CD8-positive, alpha-beta memory T cell (primary cell): ENCODE measurements at regions of chr9 and their contacts with region 1.

Region 1: DNA sequence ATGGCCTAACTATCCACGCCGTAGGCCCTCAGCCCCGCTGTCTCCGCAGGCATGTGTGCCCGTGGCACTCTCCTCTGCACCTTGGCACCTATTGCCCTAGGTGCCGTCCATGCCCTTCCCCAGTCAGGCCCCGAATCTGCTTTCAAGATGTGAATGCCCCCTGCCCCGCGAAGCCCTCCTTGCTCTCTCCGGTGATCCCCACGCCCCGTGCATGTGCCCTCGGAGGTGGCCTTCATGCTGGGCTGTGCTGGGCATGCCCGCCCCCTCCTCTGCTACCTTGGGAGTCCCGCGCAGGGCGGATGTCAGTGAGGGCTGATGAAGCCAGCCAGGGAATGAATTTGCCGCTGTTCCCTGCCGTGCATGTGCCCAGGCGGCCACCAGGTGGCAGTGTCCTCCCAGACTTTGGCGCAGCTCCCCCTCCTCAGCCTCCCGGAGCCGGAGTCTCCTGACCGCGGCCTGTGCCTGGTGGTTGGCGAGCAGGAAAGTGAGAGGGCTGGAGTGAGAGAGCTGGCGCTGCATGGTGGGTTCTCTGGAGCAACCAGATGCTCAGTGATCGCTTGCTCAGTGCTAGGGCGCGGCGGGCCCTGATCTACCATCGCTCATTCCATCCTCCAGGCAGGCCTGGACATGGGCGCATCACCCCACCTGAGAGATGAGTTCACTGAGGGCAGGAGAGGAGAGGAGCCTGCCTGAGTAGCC is 112.9 kb upstream of the LMX1B start:
- DNase-seq: peak; percentile 51 to 69 (median 54)
- H3K4me3 ChIP-seq: no peak overlapping the region
- H3K4me3 Mint-ChIP-seq: peak overlapping the region in 3 of 7 donors; percentile 21 to 41 (median 41)
- H3K27ac ChIP-seq: no peak overlapping the region
- H3K27ac Mint-ChIP-seq: peak overlapping the region in 1 of 8 donors; percentile 68
- H3K4me1 ChIP-seq: peaks cover 9% of the 10 kb centered on the region
- H3K4me1 Mint-ChIP-seq: peaks cover 8 to 30% (median 12%) of the 10 kb centered on the region in 3 donors
- H3K27me3 ChIP-seq: peaks cover 5% of the 10 kb centered on the region
- H3K27me3 Mint-ChIP-seq: peaks cover 0 to 2% of the 10 kb centered on the region in 2 donors

Region 2: GRCh38 chr9:126471084-126471624 is 29.7 kb before region 1 on chr9:
- CTCF ChIA-PET with region 1: interaction called, 21 read pairs
- POLR2A ChIA-PET with region 1: no interaction called
- DNase-seq: peak; percentile 60 to 90 (median 76)
- H3K4me3 ChIP-seq: peak overlapping the region; percentile 39
- H3K4me3 Mint-ChIP-seq: peak overlapping the region; percentile 71 to 89 (median 80)
- H3K27ac ChIP-seq: no peak overlapping the region
- H3K27ac Mint-ChIP-seq: peak overlapping the region; percentile 91 to 99 (median 96)
- H3K4me1 ChIP-seq: peaks cover 58% of the 10 kb centered on the region
- H3K4me1 Mint-ChIP-seq: peaks cover 82 to 97% (median 84%) of the 10 kb centered on the region in 3 donors
- H3K27me3 ChIP-seq: no peaks in the 10 kb centered on the region
- H3K27me3 Mint-ChIP-seq: peaks cover 0 to 1% of the 10 kb centered on the region in 2 donors

Region 3: GRCh38 chr9:126514047-126514821 is 13.4 kb after region 1 on chr9:
- CTCF ChIA-PET with region 1: interaction called, 49 read pairs
- POLR2A ChIA-PET with region 1: no interaction called
- DNase-seq: peak; percentile 40 to 73 (median 60)
- H3K4me3 ChIP-seq: no peak overlapping the region
- H3K4me3 Mint-ChIP-seq: peak overlapping the region in 1 of 7 donors; percentile 41
- H3K27ac ChIP-seq: no peak overlapping the region
- H3K27ac Mint-ChIP-seq: no peak overlapping the region
- H3K4me1 ChIP-seq: peaks cover 29% of the 10 kb centered on the region
- H3K4me1 Mint-ChIP-seq: peaks cover 31 to 39% (median 32%) of the 10 kb centered on the region in 3 donors
- H3K27me3 ChIP-seq: peaks cover 12% of the 10 kb centered on the region
- H3K27me3 Mint-ChIP-seq: peaks cover 0 to 43% of the 10 kb centered on the region in 2 donors

Region 4: GRCh38 chr9:126558051-126558665 is 57.3 kb after region 1 on chr9:
- CTCF ChIA-PET with region 1: interaction called, 204 read pairs
- POLR2A ChIA-PET with region 1: no interaction called
- DNase-seq: peak; percentile 47 to 73 (median 52)
- H3K4me3 ChIP-seq: no peak overlapping the region
- H3K4me3 Mint-ChIP-seq: no peak overlapping the region
- H3K27ac ChIP-seq: no peak overlapping the region
- H3K27ac Mint-ChIP-seq: no peak overlapping the region
- H3K4me1 ChIP-seq: no peaks in the 10 kb centered on the region
- H3K4me1 Mint-ChIP-seq: peaks cover 0 to 3% (median 0%) of the 10 kb centered on the region in 3 donors
- H3K27me3 ChIP-seq: no peaks in the 10 kb centered on the region
- H3K27me3 Mint-ChIP-seq: peaks cover 10 to 33% of the 10 kb centered on the region in 2 donors